Gastrocnemius medialis (tissue), 4 donors: ENCODE measurements at regions of chr15 and their contacts with region 1.

Region 1: DNA sequence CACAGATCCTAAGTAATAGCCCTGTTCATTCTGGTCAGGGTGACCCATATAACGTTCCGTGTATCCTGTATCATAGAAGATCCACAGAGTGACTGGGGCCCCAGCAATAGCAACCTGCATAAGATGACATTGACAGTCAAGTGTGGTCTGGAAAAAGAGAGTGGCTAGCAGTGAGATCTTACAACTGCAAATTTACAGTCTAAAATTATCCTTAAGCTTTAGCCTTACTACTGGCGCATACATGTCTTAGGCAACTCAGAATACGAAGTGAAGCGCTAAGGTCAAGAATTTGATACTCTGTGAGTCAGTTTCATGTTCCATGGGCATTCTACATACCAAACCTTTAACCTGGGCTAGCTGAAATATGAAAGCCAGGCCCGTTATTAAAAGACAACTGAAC is 29.2 kb upstream of the IGDCC4 start:
- DNase-seq: peak in 1 of 2 donors; percentile 40
- ATAC-seq: peak; percentile 95 to 97
- H3K4me3 ChIP-seq: no peak overlapping the region
- H3K27ac ChIP-seq: peak overlapping the region; percentile 72 to 82 (median 77)
- H3K4me1 ChIP-seq: peaks cover 19 to 21% of the 10 kb centered on the region in 2 donors
- H3K27me3 ChIP-seq: no peaks in the 10 kb centered on the region
- CTCF ChIP-seq: no peak
- POLR2A ChIP-seq: no peak

Region 2: DNA sequence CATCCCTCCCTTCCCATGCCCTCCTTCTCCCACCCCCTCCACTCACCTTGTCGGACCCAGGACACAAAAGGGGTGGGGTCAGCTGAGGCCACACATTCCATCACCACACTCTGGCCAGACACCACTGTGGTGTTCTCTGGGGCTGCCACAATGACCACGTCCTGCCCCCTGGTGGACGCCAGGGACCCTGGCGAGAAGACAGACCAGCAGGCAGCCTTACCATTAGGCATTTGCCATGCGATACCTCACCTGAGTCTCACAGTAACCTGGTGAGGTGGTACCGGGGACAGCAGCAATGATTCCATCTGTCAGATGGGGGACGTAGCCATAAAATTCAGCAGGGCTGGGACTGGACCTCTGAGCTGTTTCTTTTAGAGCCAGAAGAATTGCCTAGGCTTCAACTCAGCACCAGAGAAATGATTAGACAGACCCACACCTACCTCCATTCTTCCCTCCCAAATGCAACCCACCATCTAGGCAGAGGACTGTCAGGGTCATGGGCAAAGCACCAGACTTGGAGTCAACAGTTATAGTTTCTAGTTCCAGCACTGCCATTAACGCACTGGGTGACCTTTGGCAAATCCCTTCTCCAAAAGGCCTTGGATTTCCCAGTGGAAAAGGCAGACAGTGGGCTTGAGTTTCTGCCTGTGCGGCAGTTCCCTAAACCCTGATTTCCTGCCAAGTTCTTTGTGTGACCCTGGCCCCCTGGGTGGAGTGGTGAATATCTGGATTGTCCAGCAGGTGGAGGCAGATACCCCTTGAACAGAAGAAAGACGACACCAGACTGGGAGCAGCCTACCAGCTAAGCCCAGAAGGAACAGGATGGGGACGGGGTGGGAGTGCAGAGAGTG is 51.0 kb before region 1 on chr15:
- in situ Hi-C with region 1: no loop called
- intact Hi-C with region 1: loop called (anchors 2 kb)
- DNase-seq: peak in 1 of 2 donors; percentile 70
- ATAC-seq: peak; percentile 79 to 92
- H3K4me3 ChIP-seq: no peak overlapping the region
- H3K27ac ChIP-seq: peak overlapping the region; percentile 56 to 68 (median 60)
- H3K4me1 ChIP-seq: peaks cover 23% of the 10 kb centered on the region in 2 donors
- H3K27me3 ChIP-seq: no peaks in the 10 kb centered on the region
- CTCF ChIP-seq: peak; percentile 61 to 74 (median 63)
- POLR2A ChIP-seq: no peak